ENCODE measurements at regions of chr2 and their contacts with region 1.

Region 1: DNA sequence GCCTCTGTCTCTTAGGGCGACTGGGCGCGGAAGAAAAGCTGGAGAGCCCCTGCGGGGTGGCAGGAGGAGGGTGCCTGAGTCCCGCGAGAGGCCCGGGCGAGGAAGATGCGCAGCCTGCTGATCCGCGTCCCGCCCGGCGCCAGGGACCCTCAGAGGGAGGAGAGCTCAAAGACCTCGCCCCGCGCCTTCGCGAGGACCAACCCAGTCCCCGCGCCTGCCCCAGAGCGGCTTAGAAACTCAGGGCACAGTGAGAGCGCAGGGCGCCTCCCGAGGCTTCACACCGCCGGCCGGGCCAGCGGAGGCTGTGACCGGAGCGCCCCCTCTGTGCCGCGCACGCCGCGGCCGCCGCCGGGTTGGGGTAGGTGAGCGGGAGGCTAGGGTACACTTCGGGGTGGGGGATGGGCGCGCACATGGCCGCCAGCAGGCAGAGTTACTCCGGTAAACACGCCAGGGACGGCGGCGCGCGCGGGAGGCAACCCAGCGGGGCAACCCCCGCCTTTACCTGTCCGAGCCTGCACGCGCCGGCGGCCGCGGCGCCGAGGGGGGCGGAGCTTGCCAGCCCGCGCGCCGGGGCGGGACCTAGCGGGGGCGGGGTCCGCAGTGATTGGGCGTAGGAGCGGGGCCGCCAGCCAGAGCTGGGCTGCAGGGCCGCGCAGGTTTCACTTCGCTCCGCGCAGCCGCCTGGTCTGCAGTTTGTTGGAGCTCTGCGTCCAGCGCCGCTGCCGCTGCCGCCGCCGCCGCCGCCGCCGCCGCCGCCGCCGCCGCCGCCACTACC is at the start of gene BCL2L11:
- DNase-seq: peak; percentile 90 to 92
- ATAC-seq: peak; percentile 70 to 89 (median 81)
- H3K4me3 ChIP-seq: peak within 1 kb of the TSS; percentile 63 to 96 (median 82)
- H3K27ac ChIP-seq: peak within 1 kb of the TSS; percentile 51 to 94 (median 78)
- H3K4me1 ChIP-seq: peaks cover 0 to 69% (median 60%) of the 10 kb centered on the region in 9 donors
- H3K27me3 ChIP-seq: peaks cover 0 to 51% (median 25%) of the 10 kb centered on the region in 7 donors
- CTCF ChIP-seq: peak in 4 of 9 donors; percentile 11 to 48 (median 42)
- total RNA-seq, gene BCL2L11: 1.9 to 14.5 (median 7.4) TPM

Region 2: GRCh38 chr2:110812726-110813645 is 307.5 kb before region 1 on chr2:
- intact Hi-C with region 1: loop called in 7 of 10 experiments (anchors 5 to 10 kb)
- DNase-seq: no peak
- ATAC-seq: no peak
- H3K4me3 ChIP-seq: no peak overlapping the region
- H3K27ac ChIP-seq: no peak overlapping the region
- H3K4me1 ChIP-seq: peaks cover 0 to 4% (median 0%) of the 10 kb centered on the region in 9 donors
- H3K27me3 ChIP-seq: no peaks in the 10 kb centered on the region
- CTCF ChIP-seq: no peak

Region 3: GRCh38 chr2:110818767-110819481 is 301.5 kb before region 1 on chr2:
- intact Hi-C with region 1: loop called in 7 of 10 experiments (anchors 5 to 10 kb)
- DNase-seq: no peak
- ATAC-seq: no peak
- H3K4me3 ChIP-seq: no peak overlapping the region
- H3K27ac ChIP-seq: no peak overlapping the region
- H3K4me1 ChIP-seq: no peaks in the 10 kb centered on the region
- H3K27me3 ChIP-seq: peaks cover 0 to 5% (median 2%) of the 10 kb centered on the region in 7 donors
- CTCF ChIP-seq: no peak

Region 4: GRCh38 chr2:111148925-111149324 is 28.5 kb after region 1 on chr2:
- intact Hi-C with region 1: no loop called
- DNase-seq: no peak
- ATAC-seq: peak in 5 of 8 donors; percentile 46 to 77 (median 69)
- H3K4me3 ChIP-seq: no peak overlapping the region
- H3K27ac ChIP-seq: peak overlapping the region in 3 of 10 donors; percentile 5 to 51 (median 26)
- H3K4me1 ChIP-seq: peaks cover 0 to 22% (median 15%) of the 10 kb centered on the region in 9 donors
- H3K27me3 ChIP-seq: no peaks in the 10 kb centered on the region
- CTCF ChIP-seq: no peak

Region 5: GRCh38 chr2:111162718-111163331 is 42.4 kb after region 1 on chr2:
- intact Hi-C with region 1: loop called in 1 of 10 experiments (anchors 5 kb)
- DNase-seq: no peak
- ATAC-seq: peak in 3 of 8 donors; percentile 19 to 54 (median 21)
- H3K4me3 ChIP-seq: no peak overlapping the region
- H3K27ac ChIP-seq: peak overlapping the region in 5 of 10 donors; percentile 12 to 56 (median 27)
- H3K4me1 ChIP-seq: peaks cover 0 to 65% (median 45%) of the 10 kb centered on the region in 9 donors
- H3K27me3 ChIP-seq: no peaks in the 10 kb centered on the region
- CTCF ChIP-seq: no peak

Region 6: DNA sequence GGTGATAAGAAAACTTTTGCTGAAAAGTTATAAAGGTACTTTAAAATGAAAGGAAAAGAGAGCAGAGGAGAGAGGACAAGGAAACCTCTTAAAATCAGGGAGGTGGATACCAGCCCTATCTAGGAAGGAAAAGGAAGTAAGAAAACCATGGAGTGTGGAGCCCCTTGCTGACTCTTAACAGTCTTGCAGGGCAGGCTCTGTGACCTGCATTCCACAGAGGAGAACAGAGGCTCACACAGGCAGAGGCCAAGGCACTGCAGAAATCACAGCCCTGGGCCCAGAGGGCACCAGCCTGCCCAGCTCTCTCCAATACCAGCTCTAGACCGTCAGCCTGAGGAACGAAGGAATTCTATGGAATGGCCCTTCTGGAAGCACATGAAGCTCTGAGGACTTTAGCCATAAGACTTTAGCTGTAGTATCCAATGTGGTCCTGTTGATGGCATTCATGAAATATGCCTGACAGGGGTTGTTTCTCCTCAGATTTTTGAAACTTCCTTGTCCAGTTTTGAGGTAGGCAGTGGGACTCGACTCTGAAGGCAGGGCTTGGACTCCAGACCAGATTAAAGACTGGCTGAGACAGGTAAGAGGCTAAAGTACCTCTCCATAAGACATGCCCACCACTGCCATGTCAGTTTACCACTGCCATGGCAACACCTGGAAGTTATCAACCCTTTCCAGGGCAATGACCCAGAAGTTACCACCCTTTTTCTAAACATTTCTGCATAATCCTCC is 547.3 kb after region 1 on chr2:
- intact Hi-C with region 1: loop called in 6 of 10 experiments (anchors 5 to 10 kb)
- DNase-seq: peak in 1 of 2 donors; percentile 50
- ATAC-seq: peak; percentile 81 to 95 (median 90)
- H3K4me3 ChIP-seq: no peak overlapping the region
- H3K27ac ChIP-seq: peak overlapping the region in 1 of 10 donors; percentile 2
- H3K4me1 ChIP-seq: peaks cover 0 to 39% (median under 1%) of the 10 kb centered on the region in 9 donors
- H3K27me3 ChIP-seq: no peaks in the 10 kb centered on the region
- CTCF ChIP-seq: peak in 8 of 9 donors; percentile 41 to 77 (median 64)

Region 7: DNA sequence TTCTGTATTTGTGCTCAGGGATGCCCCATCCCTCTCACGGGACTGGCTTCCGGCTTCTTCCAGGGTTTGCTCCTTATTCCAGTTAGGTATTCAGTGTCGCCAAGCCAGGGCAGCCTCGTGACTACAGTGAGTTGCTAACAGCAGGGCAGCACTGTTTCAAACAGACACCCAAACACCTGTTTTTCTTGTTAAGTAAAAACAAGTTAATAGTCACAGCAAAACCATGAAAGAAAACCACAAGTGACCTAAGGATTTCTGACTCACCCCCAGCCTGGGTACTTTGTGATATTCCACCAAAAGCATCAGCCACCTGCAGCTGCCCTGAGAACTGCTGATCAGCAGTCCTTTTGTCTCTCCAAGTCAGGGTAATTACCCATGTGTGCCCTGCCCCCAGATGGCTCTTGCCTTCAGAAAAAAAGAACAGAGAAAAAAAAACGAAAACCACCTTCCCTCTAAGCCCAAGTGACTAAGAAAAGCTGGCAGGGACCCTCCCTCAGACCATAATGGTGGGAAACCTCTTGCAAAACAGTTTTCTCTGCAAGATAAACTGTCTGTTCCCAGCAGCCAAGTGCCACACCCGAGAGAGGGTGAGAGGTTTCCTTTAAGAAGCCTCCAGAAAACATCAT is 585.4 kb after region 1 on chr2:
- intact Hi-C with region 1: loop called in 4 of 10 experiments (anchors 5 to 10 kb)
- DNase-seq: no peak
- ATAC-seq: peak in 1 of 8 donors; percentile 20
- H3K4me3 ChIP-seq: no peak overlapping the region
- H3K27ac ChIP-seq: no peak overlapping the region
- H3K4me1 ChIP-seq: peaks cover 0 to 42% (median 12%) of the 10 kb centered on the region in 9 donors
- H3K27me3 ChIP-seq: no peaks in the 10 kb centered on the region
- CTCF ChIP-seq: no peak